BJ (cell line): ENCODE measurements at regions of chr18 and their contacts with region 1.

Region 1: GRCh38 chr18:79368681-79369080 is 27.0 kb upstream of the NFATC1 start:
- DNase-seq: no peak
- H3K4me3 ChIP-seq: no peak overlapping the region
- H3K27me3 ChIP-seq: no peaks in the 10 kb centered on the region
- CTCF ChIP-seq: no peak

Region 2: DNA sequence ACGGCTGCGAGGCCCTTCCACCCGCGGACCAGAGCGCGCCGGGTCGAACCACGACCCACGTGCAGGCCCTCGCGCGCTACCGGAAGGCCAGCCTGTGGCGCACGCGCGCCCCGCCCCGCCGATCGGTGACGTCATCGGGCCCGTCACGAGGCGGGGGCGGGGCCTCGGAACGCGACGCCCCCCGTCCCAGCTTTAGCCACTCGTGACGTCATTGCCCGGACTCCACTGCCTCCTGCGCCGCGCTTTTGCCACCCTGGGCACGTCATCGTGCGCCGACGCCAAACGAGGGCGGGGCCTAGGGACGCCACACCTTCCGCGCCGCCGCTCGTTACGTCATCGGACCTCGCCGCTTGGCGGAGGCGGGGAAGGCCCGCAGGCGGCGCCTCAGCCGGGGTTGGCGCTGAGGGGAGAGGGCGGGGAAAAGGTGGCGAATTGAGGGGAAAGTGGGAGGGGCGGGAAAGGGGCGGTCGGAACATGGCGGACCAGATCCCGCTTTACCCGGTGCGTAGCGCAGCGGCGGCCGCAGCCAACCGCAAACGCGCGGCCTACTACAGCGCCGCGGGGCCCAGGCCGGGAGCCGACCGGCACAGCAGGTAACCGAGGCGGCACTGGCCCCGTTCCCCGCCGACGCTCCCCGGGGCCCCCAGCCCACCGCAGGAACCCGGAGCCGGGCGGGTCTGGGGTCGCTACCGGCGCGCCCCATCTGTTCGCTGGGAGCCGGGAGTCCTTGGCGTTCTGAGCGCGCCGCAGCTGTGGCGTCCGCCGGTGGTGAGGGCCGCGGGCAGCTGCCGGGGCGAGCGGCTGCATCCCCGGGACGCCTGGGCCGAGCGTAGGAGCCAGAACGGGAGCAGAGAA is 299.5 kb before region 1 on chr18 and contains the start of gene ATP9B:
- CTCF ChIA-PET with region 1: no interaction called
- POLR2A ChIA-PET with region 1: interaction called, 11 read pairs
- DNase-seq: peak; percentile 78
- H3K4me3 ChIP-seq: peak within 1 kb of the TSS; percentile 67
- H3K27me3 ChIP-seq: no peaks in the 10 kb centered on the region
- CTCF ChIP-seq: peak; percentile 15; the same call in 1 of the 2 replicates
- polyA plus RNA-seq, gene ATP9B: 16.3 and 17.4 TPM in 2 replicates